Activated T-helper 1 cell treated with anti-CD3 and anti-CD28 coated beads, Interleukin-12 subunit alpha, Interleukin-12 subunit beta, Interleukin-2, Interleukin-4 antibody, amounts not matched to agents 30 ng/mL and 10 ng/mL and 1 ng/mL, durations not matched to agents 14 hours and 24 hours and 36 hours (primary cell): ENCODE measurements at regions of chr18 and their contacts with region 1.

Region 1: DNA sequence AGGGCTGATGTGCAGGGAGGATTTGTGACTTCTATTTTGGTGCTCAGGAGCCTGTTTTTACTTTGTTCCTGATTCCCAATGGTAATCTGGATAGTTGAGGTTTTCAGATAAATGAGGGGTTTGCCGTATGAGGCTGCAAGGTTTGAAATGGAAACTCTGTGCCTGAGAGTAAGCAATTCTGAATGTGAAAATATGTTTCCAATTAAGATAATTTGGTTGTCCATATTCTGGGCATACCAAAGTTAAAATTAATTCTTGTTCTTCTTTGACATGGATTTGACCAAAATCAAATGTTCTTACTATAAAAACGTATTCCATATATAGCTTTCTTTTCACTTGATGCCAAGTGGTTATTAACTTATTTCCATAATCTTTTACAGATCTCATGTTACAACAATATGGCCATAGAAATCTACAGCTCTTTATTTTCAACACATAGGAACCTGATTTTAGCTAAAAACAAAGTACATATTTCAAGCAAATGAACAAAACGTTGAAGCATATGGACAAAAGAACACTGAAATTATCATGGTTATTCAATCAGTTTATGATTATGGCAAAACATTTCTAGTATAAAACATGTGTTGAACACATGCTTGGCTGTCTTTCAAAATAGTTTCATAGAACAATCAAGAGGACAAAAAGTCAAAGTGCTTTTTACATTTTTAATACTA is 63.4 kb upstream of the ARHGAP28 start:
- DNase-seq: no peak
- H3K4me3 Mint-ChIP-seq: no peak overlapping the region
- H3K27ac Mint-ChIP-seq: no peak overlapping the region
- H3K4me1 Mint-ChIP-seq: no peaks in the 10 kb centered on the region
- H3K27me3 Mint-ChIP-seq: no peaks in the 10 kb centered on the region

Region 2: DNA sequence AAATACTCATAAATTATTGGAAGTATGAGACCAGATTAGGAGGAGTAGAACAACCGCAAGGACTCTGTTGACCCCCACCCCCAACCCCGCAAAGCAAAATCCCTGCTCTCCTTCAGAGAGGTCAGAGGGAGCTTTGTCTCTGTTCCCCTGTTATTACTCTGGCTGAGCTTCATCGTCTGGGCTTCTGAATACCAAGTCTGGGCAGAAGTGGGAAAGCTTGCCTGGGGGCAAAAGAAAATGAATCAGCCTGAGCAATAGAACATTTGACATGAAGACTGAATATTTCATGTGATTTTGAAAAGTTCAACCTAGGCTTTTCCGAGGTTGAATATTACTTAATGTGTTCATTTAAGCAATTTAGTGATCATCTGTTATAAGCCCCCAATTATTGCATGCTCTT is 51.2 kb before region 1 on chr18:
- intact Hi-C with region 1: no loop called
- DNase-seq: no peak
- H3K4me3 Mint-ChIP-seq: no peak overlapping the region
- H3K27ac Mint-ChIP-seq: no peak overlapping the region
- H3K4me1 Mint-ChIP-seq: no peaks in the 10 kb centered on the region
- H3K27me3 Mint-ChIP-seq: no peaks in the 10 kb centered on the region

Region 3: GRCh38 chr18:7021994-7022840 is 356.1 kb after region 1 on chr18:
- intact Hi-C with region 1: loop called (anchors 5 kb)
- DNase-seq: no peak
- H3K4me3 Mint-ChIP-seq: no peak overlapping the region
- H3K27ac Mint-ChIP-seq: no peak overlapping the region
- H3K4me1 Mint-ChIP-seq: no peaks in the 10 kb centered on the region
- H3K27me3 Mint-ChIP-seq: no peaks in the 10 kb centered on the region